Cardiac septum (tissue), 1 donor: ENCODE measurements at regions of chr11 and their contacts with region 1.

Region 1: GRCh38 chr11:73184953-73185671 is 33.0 kb upstream of the P2RY2 start:
- DNase-seq: peak; percentile 91

Region 2: DNA sequence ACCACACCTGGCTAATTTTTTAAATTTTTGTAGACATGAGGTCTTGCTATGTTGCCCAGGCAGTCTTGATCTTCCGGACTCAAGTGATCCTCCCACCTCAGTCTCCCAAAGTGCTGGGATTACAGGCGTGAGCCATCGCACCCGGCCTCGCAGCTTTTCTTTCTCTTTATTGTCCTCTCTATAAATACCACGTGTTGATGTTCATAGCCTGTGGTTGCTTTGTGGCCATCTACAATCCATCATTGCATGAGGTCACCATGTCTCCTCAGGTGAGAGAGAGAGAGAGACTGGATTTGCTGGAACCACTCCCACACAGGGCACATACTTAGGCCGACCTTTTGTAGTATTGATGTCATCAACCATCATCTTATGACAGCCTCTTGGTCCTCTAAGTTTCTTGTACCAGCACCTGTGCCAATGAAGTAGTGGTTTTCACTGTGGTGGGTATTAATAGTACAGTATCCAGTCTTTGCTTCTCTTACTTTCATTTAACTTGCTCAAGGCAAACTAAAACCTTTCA is 64.1 kb after region 1 on chr11:
- intact Hi-C with region 1: no loop called
- DNase-seq: peak; percentile 33

Region 3: DNA sequence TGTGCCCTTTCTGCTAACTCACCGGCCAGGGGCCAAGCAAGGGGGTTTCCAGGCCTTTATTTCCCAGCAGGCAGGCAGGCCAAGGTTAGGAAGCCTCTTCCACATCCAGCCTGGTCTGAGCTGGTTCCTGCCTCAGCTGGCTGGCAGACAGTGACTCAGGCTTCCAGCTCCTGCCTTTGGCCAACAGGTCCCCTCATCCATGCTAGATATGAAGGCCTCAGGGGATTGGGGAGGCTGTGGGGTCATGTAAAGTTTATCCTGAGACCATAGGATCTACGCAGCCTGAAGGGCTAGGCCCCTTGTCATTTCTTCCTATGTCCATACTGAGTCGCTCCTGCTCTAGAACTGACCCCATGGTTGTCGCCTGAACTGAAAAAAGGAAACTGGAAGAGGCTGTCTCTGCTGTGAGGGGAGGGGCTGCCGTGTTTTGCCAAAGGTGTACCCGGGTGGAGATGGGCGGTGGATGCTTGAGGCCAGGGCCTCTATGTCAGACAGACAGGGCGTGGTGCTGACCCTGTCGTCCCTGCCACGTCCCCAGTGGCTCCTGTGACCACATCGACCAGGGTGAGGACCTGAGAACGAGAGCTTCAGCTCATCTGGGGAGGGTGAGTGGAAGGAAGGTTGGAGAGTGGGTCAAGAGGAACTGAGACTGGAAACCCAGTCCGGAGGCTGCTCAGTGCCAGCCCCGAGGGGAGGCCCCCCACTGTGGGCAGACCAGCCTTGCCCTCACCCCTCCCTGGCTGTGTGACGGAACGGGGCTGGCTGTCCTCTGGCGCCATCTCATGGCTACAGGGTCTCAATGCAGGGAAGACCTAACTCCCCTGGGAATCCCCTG is 104.0 kb after region 1 on chr11:
- intact Hi-C with region 1: loop called (anchors 1 kb)
- DNase-seq: peak; percentile 93